Activated CD4-positive, alpha-beta T cell treated with anti-CD3 and anti-CD28 coated beads, Interleukin-2, amount 10 ng/mL, durations not matched to agents 7 days and 5 days (primary cell): ENCODE measurements at regions of chr6 and their contacts with region 1.

Region 1: GRCh38 chr6:135627092-135627715 is 129.7 kb upstream of the AHI1 start:
- DNase-seq: no peak
- H3K4me3 Mint-ChIP-seq: no peak overlapping the region
- H3K27ac Mint-ChIP-seq: no peak overlapping the region
- H3K4me1 Mint-ChIP-seq: peaks cover 18% of the 10 kb centered on the region
- H3K27me3 Mint-ChIP-seq: no peaks in the 10 kb centered on the region

Region 2: GRCh38 chr6:135128268-135128914 is 498.8 kb before region 1 on chr6:
- CTCF ChIA-PET with region 1: no interaction called
- POLR2A ChIA-PET with region 1: no interaction called
- DNase-seq: peak; percentile 55
- H3K4me3 Mint-ChIP-seq: peak overlapping the region; percentile 47
- H3K27ac Mint-ChIP-seq: peak overlapping the region; percentile 96
- H3K4me1 Mint-ChIP-seq: peaks cover 36% of the 10 kb centered on the region
- H3K27me3 Mint-ChIP-seq: no peaks in the 10 kb centered on the region

Region 3: GRCh38 chr6:135600086-135600702 is 27.0 kb before region 1 on chr6:
- CTCF ChIA-PET with region 1: interaction called, 10 read pairs
- POLR2A ChIA-PET with region 1: no interaction called
- DNase-seq: no peak
- H3K4me3 Mint-ChIP-seq: no peak overlapping the region
- H3K27ac Mint-ChIP-seq: no peak overlapping the region
- H3K4me1 Mint-ChIP-seq: no peaks in the 10 kb centered on the region
- H3K27me3 Mint-ChIP-seq: no peaks in the 10 kb centered on the region

Region 4: GRCh38 chr6:135638108-135638507 is 10.9 kb after region 1 on chr6:
- CTCF ChIA-PET with region 1: interaction called, 10 read pairs
- POLR2A ChIA-PET with region 1: interaction called, 5 read pairs
- DNase-seq: no peak
- H3K4me3 Mint-ChIP-seq: no peak overlapping the region
- H3K27ac Mint-ChIP-seq: no peak overlapping the region
- H3K4me1 Mint-ChIP-seq: peaks cover 11% of the 10 kb centered on the region
- H3K27me3 Mint-ChIP-seq: peaks cover 9% of the 10 kb centered on the region